ENCODE measurements at regions of chr10 and their contacts with region 1.

Region 1: GRCh38 chr10:86755740-86756510 is 494 bp upstream of the BMPR1A start:
- DNase-seq: no peak
- ATAC-seq: peak; percentile 92
- H3K4me3 ChIP-seq: peak overlapping the region; percentile 71 to 82
- H3K27ac ChIP-seq: peak overlapping the region; percentile 94
- H3K4me1 ChIP-seq: peaks cover 21% of the 10 kb centered on the region
- H3K27me3 ChIP-seq: no peaks in the 10 kb centered on the region
- CTCF ChIP-seq: no peak

Region 2: GRCh38 chr10:86792461-86793167 is 36.7 kb after region 1 on chr10:
- CTCF ChIA-PET with region 1: no interaction called
- POLR2A ChIA-PET with region 1: interaction called, 11 read pairs
- in situ Hi-C with region 1: no loop called
- intact Hi-C with region 1: no loop called
- DNase-seq: no peak
- ATAC-seq: 0 out of 2 replicates have a peak, but pooled peaks have one; percentile 54
- H3K4me3 ChIP-seq: no peak overlapping the region
- H3K27ac ChIP-seq: no peak overlapping the region
- H3K4me1 ChIP-seq: peaks cover 12% of the 10 kb centered on the region; the same call in 1 of the 2 replicates
- H3K27me3 ChIP-seq: no peaks in the 10 kb centered on the region
- CTCF ChIP-seq: no peak

Region 3: DNA sequence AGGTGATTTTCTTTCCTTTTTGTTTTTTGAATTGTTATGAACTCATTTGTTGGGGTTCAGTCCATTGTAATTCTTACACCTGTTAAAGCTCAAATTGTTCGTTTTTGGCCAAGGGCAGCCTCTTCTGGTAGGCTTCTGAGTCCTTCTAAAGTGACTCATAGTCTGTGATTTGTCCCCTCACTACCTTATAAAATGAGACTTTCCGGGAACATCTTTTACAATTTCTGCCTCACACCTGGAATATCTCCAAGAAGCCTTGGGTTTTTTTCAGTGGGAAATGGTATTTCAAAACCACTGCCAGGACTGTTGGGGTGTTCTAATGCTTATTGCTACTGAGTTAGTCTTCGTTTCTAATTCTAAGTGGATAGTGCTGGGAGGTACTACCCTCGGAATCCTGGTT is 57.2 kb after region 1 on chr10:
- CTCF ChIA-PET with region 1: no interaction called
- POLR2A ChIA-PET with region 1: interaction called, 10 read pairs
- in situ Hi-C with region 1: no loop called
- intact Hi-C with region 1: no loop called
- DNase-seq: no peak
- ATAC-seq: no peak
- H3K4me3 ChIP-seq: no peak overlapping the region
- H3K27ac ChIP-seq: no peak overlapping the region
- H3K4me1 ChIP-seq: 0 out of 2 replicates have a peak, but pooled peaks cover 2% of the 10 kb centered on the region
- H3K27me3 ChIP-seq: no peaks in the 10 kb centered on the region
- CTCF ChIP-seq: no peak